H1 (cell line): ENCODE measurements at regions of chr11 and their contacts with region 1.

Region 1: DNA sequence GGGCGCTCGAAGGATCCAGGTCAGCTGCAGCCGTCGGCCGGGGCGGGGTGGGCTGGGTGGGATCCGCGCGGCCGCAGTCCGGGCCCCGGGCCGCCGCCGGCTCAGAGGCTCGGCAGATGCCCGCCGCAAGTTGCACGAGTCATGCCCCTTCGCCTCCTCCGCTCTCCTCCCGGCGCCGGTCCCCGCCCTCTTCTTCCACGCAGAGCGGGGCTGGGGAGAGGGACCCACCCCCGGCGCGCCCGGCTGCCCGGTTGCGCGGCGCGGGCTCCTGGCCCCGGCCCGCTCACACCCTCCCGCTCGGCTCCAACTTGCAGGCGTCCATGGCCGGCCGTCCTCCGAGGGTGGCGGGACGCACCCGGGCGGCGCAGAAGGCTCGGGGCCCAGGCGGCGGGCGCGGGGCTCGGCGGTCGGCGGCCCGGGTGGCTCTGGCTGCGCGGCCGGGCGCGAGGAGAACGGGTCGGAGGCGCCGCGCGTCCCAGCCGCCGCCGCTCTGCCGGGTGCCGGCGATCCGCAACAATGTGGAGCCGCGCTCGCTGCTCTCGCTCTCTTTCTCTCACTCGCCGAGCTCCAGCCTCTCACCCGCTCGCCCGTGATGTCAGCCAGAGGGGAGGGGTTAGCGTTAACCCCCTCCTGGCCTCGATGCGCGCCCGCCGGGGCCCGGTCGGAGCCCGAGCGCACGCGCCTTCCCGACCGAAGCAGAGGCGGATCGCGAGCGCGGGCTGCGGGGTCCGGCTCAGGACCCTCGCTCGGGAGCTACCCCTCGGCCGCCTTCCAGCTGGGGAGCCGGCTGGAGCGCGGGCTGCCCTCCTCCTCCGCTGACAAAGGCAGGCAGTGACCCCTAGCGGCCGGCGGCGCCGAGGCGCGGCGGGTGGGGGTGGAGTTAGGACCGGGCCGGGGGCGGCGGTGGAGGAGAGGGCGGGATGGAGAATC is at the start of gene NECTIN1:
- DNase-seq: peak; percentile 71 to 98
- H3K4me3 ChIP-seq: peak within 1 kb of the TSS; percentile 82 to 97 (median 92)
- H3K27ac ChIP-seq: peak within 1 kb of the TSS; percentile 38; the same call in 1 of the 2 replicates
- H3K4me1 ChIP-seq: peaks cover 14 to 29% (median 22%) of the 10 kb centered on the region in 4 experiments
- H3K27me3 ChIP-seq: no peaks in the 10 kb centered on the region; a peak in 2 of 7 replicates
- CTCF ChIP-seq: peak; percentile 73 to 90 (median 88)
- EP300 ChIP-seq: 0 out of 3 replicates have a peak, but pooled peaks of 1 of the 2 experiments have one; percentile 8
- POLR2A ChIP-seq: peak in 1 of 2 experiments; percentile 52; a peak in 1 of 3 replicates
- RAD21 ChIP-seq: peak; percentile 80 to 91
- total RNA-seq, gene NECTIN1: 97.6 and 97.7 TPM in 2 replicates

Region 2: GRCh38 chr11:119361056-119361787 is 367.7 kb before region 1 on chr11:
- CTCF ChIA-PET with region 1: no interaction called
- POLR2A ChIA-PET with region 1: no interaction called
- DNase-seq: no peak
- H3K4me3 ChIP-seq: peak overlapping the region in 3 of 4 experiments; percentile 9 to 28 (median 27); a peak in 3 of 8 replicates
- H3K27ac ChIP-seq: no peak overlapping the region
- H3K4me1 ChIP-seq: peaks cover 12 to 25% (median 20%) of the 10 kb centered on the region in 4 experiments
- H3K27me3 ChIP-seq: peaks cover 18 to 36% (median 31%) of the 10 kb centered on the region in 4 experiments
- CTCF ChIP-seq: no peak
- EP300 ChIP-seq: no peak
- POLR2A ChIP-seq: no peak
- RAD21 ChIP-seq: no peak

Region 3: GRCh38 chr11:119673759-119674336 is 55.1 kb before region 1 on chr11:
- CTCF ChIA-PET with region 1: interaction called, 15 read pairs
- POLR2A ChIA-PET with region 1: interaction called, 3 read pairs
- DNase-seq: no peak
- H3K4me3 ChIP-seq: no peak overlapping the region
- H3K27ac ChIP-seq: no peak overlapping the region
- H3K4me1 ChIP-seq: no peaks in the 10 kb centered on the region; a peak in 3 of 7 replicates
- H3K27me3 ChIP-seq: no peaks in the 10 kb centered on the region
- CTCF ChIP-seq: no peak
- EP300 ChIP-seq: no peak
- POLR2A ChIP-seq: no peak
- RAD21 ChIP-seq: no peak

Region 4: GRCh38 chr11:119694334-119694733 is 34.6 kb before region 1 on chr11:
- CTCF ChIA-PET with region 1: interaction called, 171 read pairs
- POLR2A ChIA-PET with region 1: no interaction called
- DNase-seq: no peak
- H3K4me3 ChIP-seq: no peak overlapping the region
- H3K27ac ChIP-seq: no peak overlapping the region
- H3K4me1 ChIP-seq: peaks cover 10 to 68% (median 46%) of the 10 kb centered on the region in 4 experiments
- H3K27me3 ChIP-seq: no peaks in the 10 kb centered on the region
- CTCF ChIP-seq: peak in 2 of 3 experiments; percentile 6 to 30; a peak in 2 of 4 replicates
- EP300 ChIP-seq: no peak
- POLR2A ChIP-seq: no peak
- RAD21 ChIP-seq: peak in 1 of 2 experiments; percentile 25; a peak in 2 of 4 replicates

Region 5: DNA sequence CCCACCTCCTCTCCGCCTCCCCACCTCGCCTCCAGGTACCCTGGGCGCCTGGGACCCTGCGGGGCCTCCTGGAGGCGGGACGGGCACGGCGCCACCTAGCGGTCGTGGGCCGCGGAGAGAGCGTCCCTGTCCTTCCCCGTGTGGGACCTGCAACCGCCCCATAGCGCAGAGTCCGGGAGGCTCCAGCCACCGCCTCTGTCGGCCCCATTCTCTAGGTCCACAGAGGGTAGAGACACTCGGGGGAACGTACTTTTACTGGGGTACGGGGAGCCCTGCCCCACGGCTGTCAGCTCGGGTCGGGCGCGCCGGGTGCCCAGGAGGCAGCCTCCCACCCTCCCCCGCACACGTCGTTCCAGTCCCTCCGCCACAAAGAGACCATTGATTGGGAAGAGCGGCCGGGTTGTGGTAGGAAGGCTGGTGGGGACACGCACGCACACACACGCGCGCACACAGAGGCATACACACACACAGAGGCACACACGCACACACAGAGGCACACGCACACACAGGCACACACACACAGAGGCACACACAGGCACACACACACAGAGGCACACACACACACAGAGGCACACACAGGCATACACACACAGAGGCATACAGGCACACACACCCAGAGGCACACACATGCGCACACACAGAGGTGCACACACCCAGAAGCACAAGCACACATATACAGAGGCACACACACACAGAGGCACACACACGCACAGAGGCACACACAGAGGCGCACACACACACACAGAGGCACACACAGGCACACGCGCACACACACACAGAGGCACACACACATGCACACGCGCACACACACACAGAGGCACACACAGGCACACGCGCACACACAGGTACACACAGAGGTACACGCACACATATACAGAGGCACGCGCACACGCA is 12.7 kb after region 1 on chr11:
- CTCF ChIA-PET with region 1: interaction called, 17 read pairs
- POLR2A ChIA-PET with region 1: interaction called, 4 read pairs
- DNase-seq: peak in 1 of 2 experiments; percentile 95
- H3K4me3 ChIP-seq: peak overlapping the region; percentile 11 to 67 (median 34); a peak in 6 of 8 replicates
- H3K27ac ChIP-seq: no peak overlapping the region
- H3K4me1 ChIP-seq: peaks cover 4 to 12% (median 10%) of the 10 kb centered on the region in 4 experiments
- H3K27me3 ChIP-seq: peaks cover 0 to 22% (median 13%) of the 10 kb centered on the region in 4 experiments; a peak in 6 of 7 replicates
- CTCF ChIP-seq: peak; percentile 85 to 91 (median 89)
- EP300 ChIP-seq: no peak
- POLR2A ChIP-seq: no peak
- RAD21 ChIP-seq: peak; percentile 53 to 74

Region 6: GRCh38 chr11:119964136-119965025 is 235.5 kb after region 1 on chr11:
- CTCF ChIA-PET with region 1: no interaction called
- POLR2A ChIA-PET with region 1: no interaction called
- DNase-seq: peak in 1 of 2 experiments; percentile 50
- H3K4me3 ChIP-seq: no peak overlapping the region; a peak in 2 of 8 replicates
- H3K27ac ChIP-seq: peak overlapping the region; percentile 68
- H3K4me1 ChIP-seq: peaks cover 4 to 13% (median 9%) of the 10 kb centered on the region in 4 experiments; a peak in 6 of 7 replicates
- H3K27me3 ChIP-seq: no peaks in the 10 kb centered on the region
- CTCF ChIP-seq: no peak
- EP300 ChIP-seq: 0 out of 3 replicates have a peak, but pooled peaks of 1 of the 2 experiments have one; percentile 15
- POLR2A ChIP-seq: no peak
- RAD21 ChIP-seq: no peak; a peak in 1 of 4 replicates